Pancreas (tissue), 10 donors: ENCODE measurements at regions of chrX and their contacts with region 1.

Region 1: GRCh38 chrX:106952988-106953387 is 32.8 kb downstream of the CLDN2 start:
- DNase-seq: no peak
- ATAC-seq: peak in 3 of 4 donors; percentile 76 to 90 (median 82)
- H3K4me3 ChIP-seq: no peak overlapping the region
- H3K27ac ChIP-seq: no peak overlapping the region
- H3K4me1 ChIP-seq: no peaks in the 10 kb centered on the region
- H3K27me3 ChIP-seq: no peaks in the 10 kb centered on the region
- CTCF ChIP-seq: peak in 3 of 4 donors; percentile 32 to 44 (median 34)

Region 2: DNA sequence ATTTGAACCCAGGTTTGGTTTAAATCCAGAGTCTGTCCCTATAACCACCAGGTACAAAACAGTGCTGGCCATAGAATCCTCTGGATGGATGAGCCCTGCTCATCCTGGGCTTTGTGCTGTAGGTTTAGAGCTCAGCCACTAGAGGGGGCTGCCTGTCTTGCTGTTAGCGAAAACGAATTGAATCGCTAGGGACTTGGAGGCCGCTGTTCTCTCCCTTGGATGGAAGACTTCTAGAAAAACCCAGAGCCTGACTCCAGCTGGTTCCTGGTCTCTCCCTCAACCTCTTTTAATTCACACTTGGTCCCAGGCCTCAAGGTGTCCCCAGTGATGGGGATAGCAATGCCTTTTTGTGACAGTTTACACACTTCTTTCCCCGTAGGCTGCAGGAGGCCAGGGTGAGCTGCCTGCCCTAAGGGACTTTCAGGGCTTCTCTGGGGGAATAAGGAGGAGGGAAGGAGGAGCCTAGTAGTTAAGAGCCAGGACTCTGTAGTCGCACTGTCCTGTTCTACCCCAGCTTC is 58.5 kb before region 1 on chrX:
- intact Hi-C with region 1: loop called in 1 of 3 experiments (anchors 10 kb)
- DNase-seq: peak in 5 of 6 donors; percentile 26 to 72 (median 63)
- ATAC-seq: peak; percentile 76 to 90 (median 88)
- H3K4me3 ChIP-seq: no peak overlapping the region
- H3K27ac ChIP-seq: no peak overlapping the region
- H3K4me1 ChIP-seq: no peaks in the 10 kb centered on the region
- H3K27me3 ChIP-seq: no peaks in the 10 kb centered on the region
- CTCF ChIP-seq: peak; percentile 68 to 81 (median 78)

Region 3: GRCh38 chrX:106903291-106903824 is 49.6 kb before region 1 on chrX and contains the start of gene RIPPLY1:
- intact Hi-C with region 1: loop called in 2 of 3 experiments (anchors 5 to 10 kb)
- DNase-seq: no peak
- ATAC-seq: no peak
- H3K4me3 ChIP-seq: no peak within 1 kb of the TSS
- H3K27ac ChIP-seq: no peak within 1 kb of the TSS
- H3K4me1 ChIP-seq: no peaks in the 10 kb centered on the region
- H3K27me3 ChIP-seq: no peaks in the 10 kb centered on the region
- CTCF ChIP-seq: no peak
- total RNA-seq, gene RIPPLY1: not detected

Region 4: GRCh38 chrX:107398115-107398514 is 445.1 kb after region 1 on chrX:
- intact Hi-C with region 1: no loop called
- DNase-seq: no peak
- ATAC-seq: no peak
- H3K4me3 ChIP-seq: no peak overlapping the region
- H3K27ac ChIP-seq: no peak overlapping the region
- H3K4me1 ChIP-seq: no peaks in the 10 kb centered on the region
- H3K27me3 ChIP-seq: peaks cover 0 to 21% (median 0%) of the 10 kb centered on the region in 4 donors
- CTCF ChIP-seq: no peak